Endothelial cell of umbilical vein (primary cell): ENCODE measurements at regions of chr5 and their contacts with region 1.

Region 1: GRCh38 chr5:77076961-77077823 is 9.9 kb downstream of the ZBED3 start:
- DNase-seq: peak; percentile 61
- H3K4me3 ChIP-seq: peak overlapping the region in 2 of 3 experiments; percentile 35
- H3K27ac ChIP-seq: no peak overlapping the region
- H3K4me1 ChIP-seq: peaks cover 3% of the 10 kb centered on the region
- H3K27me3 ChIP-seq: no peaks in the 10 kb centered on the region
- CTCF ChIP-seq: peak; percentile 79 to 89
- POLR2A ChIP-seq: no peak

Region 2: DNA sequence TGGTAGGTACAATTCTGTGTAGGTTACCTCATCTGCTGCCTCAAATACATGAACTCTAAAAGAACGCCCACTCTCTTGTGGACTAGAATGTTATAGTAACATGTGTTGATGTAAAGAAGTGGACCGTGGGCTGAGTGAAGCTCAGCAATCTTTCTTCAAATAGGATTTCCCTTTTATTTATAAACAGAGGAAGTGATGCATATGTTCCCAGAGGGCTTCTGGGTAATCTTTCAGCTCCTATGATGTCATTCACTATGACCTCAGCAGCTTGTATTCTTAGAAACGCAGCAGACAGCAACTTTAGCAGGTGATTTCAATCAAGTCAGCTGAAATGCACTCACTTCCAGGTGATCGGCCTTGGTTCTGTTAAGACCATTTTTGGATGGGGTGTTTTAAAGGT is 468.4 kb before region 1 on chr5:
- CTCF ChIA-PET with region 1: no interaction called
- POLR2A ChIA-PET with region 1: no interaction called
- dilution Hi-C with region 1: no loop called
- intact Hi-C with region 1: loop called (anchors 1 kb)
- DNase-seq: peak; percentile 64
- H3K4me3 ChIP-seq: no peak overlapping the region
- H3K27ac ChIP-seq: no peak overlapping the region
- H3K4me1 ChIP-seq: no peaks in the 10 kb centered on the region
- H3K27me3 ChIP-seq: no peaks in the 10 kb centered on the region
- CTCF ChIP-seq: no peak
- POLR2A ChIP-seq: no peak

Region 3: GRCh38 chr5:76983468-76983867 is 93.7 kb before region 1 on chr5:
- CTCF ChIA-PET with region 1: no interaction called
- POLR2A ChIA-PET with region 1: no interaction called
- dilution Hi-C with region 1: no loop called
- intact Hi-C with region 1: no loop called
- DNase-seq: no peak
- H3K4me3 ChIP-seq: no peak overlapping the region
- H3K27ac ChIP-seq: no peak overlapping the region
- H3K4me1 ChIP-seq: no peaks in the 10 kb centered on the region
- H3K27me3 ChIP-seq: no peaks in the 10 kb centered on the region
- CTCF ChIP-seq: no peak
- POLR2A ChIP-seq: no peak

Region 4: DNA sequence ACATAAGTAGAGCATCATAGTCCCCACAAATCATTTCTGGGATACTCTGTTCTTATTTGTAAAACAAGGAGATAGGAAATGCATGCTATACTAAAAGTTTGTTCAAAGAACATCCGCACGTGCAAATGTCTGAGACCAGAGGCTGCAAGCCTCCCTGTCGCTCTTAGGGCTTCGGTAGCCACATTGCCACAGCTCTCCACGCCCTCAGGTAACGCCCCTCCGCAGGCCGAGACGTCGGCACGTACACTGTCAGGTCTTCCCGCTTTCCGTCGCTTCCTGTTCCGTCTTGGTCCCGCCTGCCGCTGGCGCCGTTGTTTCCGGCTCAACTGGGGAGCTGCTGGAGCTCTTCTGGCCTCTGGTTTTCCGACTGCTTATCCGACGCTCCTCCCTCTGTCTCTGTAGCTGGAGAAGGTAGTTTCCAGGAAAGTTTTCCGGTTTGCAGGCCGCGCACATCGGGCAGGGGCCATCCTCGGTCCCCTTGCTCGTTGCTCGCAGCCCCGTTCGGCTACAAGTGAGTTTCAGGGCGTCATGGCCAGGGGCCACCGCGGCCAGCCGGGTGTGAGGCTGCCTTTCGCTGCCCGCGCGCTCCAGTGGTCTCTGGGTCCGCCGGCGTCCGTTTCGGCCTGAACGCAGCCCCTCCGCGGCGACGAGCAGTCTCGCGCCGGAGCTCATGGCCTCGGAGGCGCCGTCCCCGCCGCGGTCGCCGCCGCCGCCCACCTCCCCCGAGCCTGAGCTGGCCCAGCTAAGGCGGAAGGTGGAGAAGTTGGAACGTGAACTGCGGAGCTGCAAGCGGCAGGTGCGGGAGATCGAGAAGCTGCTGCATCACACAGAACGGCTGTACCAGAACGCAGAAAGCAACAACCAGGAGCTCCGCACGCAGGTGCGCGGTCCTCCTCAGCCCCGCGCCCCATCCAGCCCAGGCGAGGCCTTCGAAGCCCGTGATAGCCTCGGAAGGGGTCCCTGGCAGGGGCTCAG is 46.8 kb before region 1 on chr5 and contains the start of gene AGGF1:
- CTCF ChIA-PET with region 1: interaction called, 28 read pairs
- POLR2A ChIA-PET with region 1: no interaction called
- dilution Hi-C with region 1: no loop called
- intact Hi-C with region 1: loop called (anchors 1 kb)
- DNase-seq: peak; percentile 93
- H3K4me3 ChIP-seq: peak within 1 kb of the TSS; percentile 71 to 77 (median 76)
- H3K27ac ChIP-seq: peak within 1 kb of the TSS; percentile 74
- H3K4me1 ChIP-seq: peaks cover 11% of the 10 kb centered on the region
- H3K27me3 ChIP-seq: no peaks in the 10 kb centered on the region
- CTCF ChIP-seq: no peak
- POLR2A ChIP-seq: peak; percentile 89
- total RNA-seq, gene AGGF1: 16.1 and 19.9 TPM in 2 replicates

Region 5: GRCh38 chr5:77066823-77067442 is 10.3 kb before region 1 on chr5:
- CTCF ChIA-PET with region 1: interaction called, 19 read pairs
- POLR2A ChIA-PET with region 1: no interaction called
- dilution Hi-C with region 1: no loop called
- intact Hi-C with region 1: no loop called
- DNase-seq: no peak
- H3K4me3 ChIP-seq: no peak overlapping the region
- H3K27ac ChIP-seq: no peak overlapping the region
- H3K4me1 ChIP-seq: no peaks in the 10 kb centered on the region
- H3K27me3 ChIP-seq: no peaks in the 10 kb centered on the region
- CTCF ChIP-seq: no peak
- POLR2A ChIP-seq: no peak

Region 6: DNA sequence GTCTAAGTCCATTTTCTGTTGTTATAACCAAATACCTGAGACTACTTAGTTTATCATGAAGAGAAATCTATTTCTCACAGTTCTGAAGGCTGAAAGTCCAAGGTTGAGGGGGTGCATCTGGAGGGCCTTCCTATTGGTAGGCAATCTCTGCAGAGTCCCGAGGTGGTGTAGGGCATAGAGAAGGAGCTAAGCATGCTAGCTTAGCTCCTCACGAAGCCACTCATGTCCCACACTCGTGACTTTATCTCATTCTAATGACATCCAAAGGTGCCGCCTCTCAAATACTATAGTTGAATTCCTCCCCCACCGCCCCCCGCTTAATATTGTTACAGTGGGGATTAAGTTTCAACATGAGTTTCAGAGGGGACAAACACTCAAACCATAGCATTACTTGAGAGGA is 45.9 kb after region 1 on chr5:
- CTCF ChIA-PET with region 1: no interaction called
- POLR2A ChIA-PET with region 1: no interaction called
- dilution Hi-C with region 1: no loop called
- intact Hi-C with region 1: no loop called
- DNase-seq: no peak
- H3K4me3 ChIP-seq: no peak overlapping the region
- H3K27ac ChIP-seq: no peak overlapping the region
- H3K4me1 ChIP-seq: no peaks in the 10 kb centered on the region
- H3K27me3 ChIP-seq: no peaks in the 10 kb centered on the region
- CTCF ChIP-seq: no peak
- POLR2A ChIP-seq: no peak

Region 7: DNA sequence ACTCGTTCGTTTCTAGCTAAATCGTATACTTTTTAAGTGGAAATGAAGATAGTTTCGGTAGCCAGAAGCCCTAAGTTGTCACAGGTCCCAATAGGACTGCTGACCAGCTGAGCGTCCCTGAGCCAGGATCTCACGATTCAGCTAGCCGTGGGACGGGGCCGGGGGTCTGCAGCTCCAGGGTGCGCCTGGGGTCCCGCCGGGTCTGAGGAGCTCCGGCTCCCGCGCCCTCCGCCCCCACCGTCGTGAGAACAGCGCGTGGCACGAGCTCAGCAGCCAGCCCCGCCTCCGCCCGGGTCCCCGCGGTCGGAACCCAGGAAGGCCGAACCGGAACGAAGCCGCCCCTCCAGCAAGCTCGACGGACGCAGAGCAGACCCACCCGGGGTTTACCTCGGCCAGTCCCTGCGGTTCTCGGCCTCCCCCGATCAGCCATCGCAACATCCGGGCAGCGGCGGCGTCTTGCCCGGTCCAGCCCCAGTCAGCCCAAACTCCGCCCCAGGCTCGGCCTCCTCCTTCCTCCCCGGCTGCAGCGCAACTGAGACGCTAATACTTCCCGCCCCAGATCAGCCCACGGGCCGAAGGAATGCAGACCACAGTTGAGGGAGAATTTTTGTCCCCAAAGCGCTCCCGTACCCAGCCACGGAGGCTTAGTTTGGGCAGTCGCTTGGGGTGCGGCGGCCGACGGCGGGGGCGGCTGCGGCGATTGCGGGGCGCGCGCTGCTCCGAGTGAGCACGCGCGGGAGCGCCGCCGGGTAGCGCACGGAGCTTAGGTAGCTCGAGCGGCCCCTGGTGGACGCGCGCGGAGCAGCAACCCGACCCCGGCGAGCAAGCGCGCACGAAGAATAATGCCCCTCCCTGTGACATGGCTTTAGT is 414.8 kb after region 1 on chr5 and contains the start of gene WDR41:
- CTCF ChIA-PET with region 1: interaction called, 13 read pairs
- POLR2A ChIA-PET with region 1: no interaction called
- dilution Hi-C with region 1: no loop called
- intact Hi-C with region 1: loop called (anchors 1 kb)
- DNase-seq: peak; percentile 96
- H3K4me3 ChIP-seq: peak within 1 kb of the TSS; percentile 89 to 94 (median 90)
- H3K27ac ChIP-seq: peak within 1 kb of the TSS; percentile 79
- H3K4me1 ChIP-seq: peaks cover 9% of the 10 kb centered on the region
- H3K27me3 ChIP-seq: peaks cover 12 to 25% of the 10 kb centered on the region in 2 experiments
- CTCF ChIP-seq: peak; percentile 93 to 94
- POLR2A ChIP-seq: peak; percentile 54
- total RNA-seq, gene WDR41: 23.9 and 33.6 TPM in 2 replicates